Activated CD4-positive, alpha-beta memory T cell treated with anti-CD3 and anti-CD28 coated beads for 36 hours (primary cell): ENCODE measurements at regions of chr14 and their contacts with region 1.

Region 1: GRCh38 chr14:97707603-97708002 is 910.4 kb downstream of the VRK1 start:
- DNase-seq: peak; percentile 60
- H3K4me3 Mint-ChIP-seq: no peak overlapping the region
- H3K27ac Mint-ChIP-seq: no peak overlapping the region
- H3K4me1 Mint-ChIP-seq: peaks cover 90% of the 10 kb centered on the region
- H3K27me3 Mint-ChIP-seq: no peaks in the 10 kb centered on the region

Region 2: DNA sequence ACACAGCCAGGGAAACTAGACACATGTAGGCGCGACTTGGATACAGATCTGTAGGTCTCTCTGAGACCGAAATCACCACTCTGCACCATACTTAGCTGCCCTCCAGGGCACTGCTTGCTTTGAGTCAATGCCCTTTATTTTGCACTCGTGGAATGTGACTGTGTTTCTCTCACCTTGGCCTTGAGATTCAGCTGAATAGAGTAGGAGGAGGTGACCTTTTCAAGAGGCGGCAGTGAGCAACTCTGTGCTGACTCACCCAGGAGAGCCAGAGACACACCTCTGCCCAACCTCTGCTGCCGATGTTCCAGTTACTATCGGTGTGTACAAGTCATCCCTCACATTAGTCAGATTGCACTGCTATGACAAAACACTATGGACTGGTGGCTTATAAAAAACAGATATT is 327.1 kb before region 1 on chr14:
- CTCF ChIA-PET with region 1: no interaction called
- POLR2A ChIA-PET with region 1: no interaction called
- intact Hi-C with region 1: loop called (anchors 2 kb)
- DNase-seq: peak; percentile 89
- H3K4me3 Mint-ChIP-seq: no peak overlapping the region
- H3K27ac Mint-ChIP-seq: peak overlapping the region; percentile 78
- H3K4me1 Mint-ChIP-seq: peaks cover 59% of the 10 kb centered on the region
- H3K27me3 Mint-ChIP-seq: no peaks in the 10 kb centered on the region

Region 3: DNA sequence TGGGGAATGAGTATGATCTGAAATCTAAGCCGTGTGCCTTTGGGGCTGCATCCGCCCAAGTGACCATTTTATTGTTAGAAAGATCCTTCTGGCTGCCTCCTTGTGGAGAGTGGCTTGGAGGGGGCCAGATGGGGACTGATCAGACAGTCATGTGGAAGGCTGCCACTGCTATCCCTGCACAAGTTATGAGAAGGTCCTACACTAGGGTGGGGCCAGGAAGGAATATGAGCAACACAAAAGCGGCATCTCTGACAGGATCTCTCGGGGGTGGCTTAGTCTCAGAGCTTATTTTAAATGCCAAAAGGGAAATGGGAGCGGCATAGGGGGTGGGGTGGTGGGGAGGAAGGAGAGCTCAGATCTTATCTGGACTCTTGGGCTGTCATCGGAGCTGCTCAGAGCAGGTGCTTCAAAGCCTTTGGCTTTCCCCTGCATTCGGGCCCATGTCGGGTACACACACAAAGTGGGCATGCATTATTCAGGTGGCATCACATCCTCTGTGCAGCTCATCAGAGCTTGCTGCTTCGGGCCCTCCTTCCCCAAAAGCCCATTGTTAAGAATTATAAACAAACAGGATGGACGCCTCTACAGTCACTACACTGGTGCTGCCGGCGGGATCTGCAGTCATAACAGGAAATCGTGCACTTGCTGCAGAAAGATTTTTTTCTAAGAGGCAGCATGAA is 105.0 kb before region 1 on chr14:
- CTCF ChIA-PET with region 1: no interaction called
- POLR2A ChIA-PET with region 1: interaction called, 4 read pairs
- intact Hi-C with region 1: loop called (anchors 2 kb)
- DNase-seq: peak; percentile 80
- H3K4me3 Mint-ChIP-seq: no peak overlapping the region
- H3K27ac Mint-ChIP-seq: no peak overlapping the region
- H3K4me1 Mint-ChIP-seq: peaks cover 29% of the 10 kb centered on the region
- H3K27me3 Mint-ChIP-seq: no peaks in the 10 kb centered on the region

Region 4: GRCh38 chr14:97634751-97635150 is 72.9 kb before region 1 on chr14:
- CTCF ChIA-PET with region 1: no interaction called
- POLR2A ChIA-PET with region 1: no interaction called
- intact Hi-C with region 1: loop called (anchors 5 kb)
- DNase-seq: peak; percentile 36
- H3K4me3 Mint-ChIP-seq: peak overlapping the region; percentile 75
- H3K27ac Mint-ChIP-seq: no peak overlapping the region
- H3K4me1 Mint-ChIP-seq: peaks cover 25% of the 10 kb centered on the region
- H3K27me3 Mint-ChIP-seq: no peaks in the 10 kb centered on the region

Region 5: GRCh38 chr14:97788364-97788763 is 80.8 kb after region 1 on chr14:
- CTCF ChIA-PET with region 1: no interaction called
- POLR2A ChIA-PET with region 1: interaction called, 3 read pairs
- intact Hi-C with region 1: loop called (anchors 2 kb)
- DNase-seq: no peak
- H3K4me3 Mint-ChIP-seq: no peak overlapping the region
- H3K27ac Mint-ChIP-seq: no peak overlapping the region
- H3K4me1 Mint-ChIP-seq: peaks cover 5% of the 10 kb centered on the region
- H3K27me3 Mint-ChIP-seq: no peaks in the 10 kb centered on the region

Region 6: GRCh38 chr14:97902630-97903029 is 195.0 kb after region 1 on chr14:
- CTCF ChIA-PET with region 1: no interaction called
- POLR2A ChIA-PET with region 1: no interaction called
- intact Hi-C with region 1: no loop called
- DNase-seq: no peak
- H3K4me3 Mint-ChIP-seq: no peak overlapping the region
- H3K27ac Mint-ChIP-seq: no peak overlapping the region
- H3K4me1 Mint-ChIP-seq: no peaks in the 10 kb centered on the region
- H3K27me3 Mint-ChIP-seq: no peaks in the 10 kb centered on the region

Region 7: GRCh38 chr14:98138666-98139065 is 431.1 kb after region 1 on chr14:
- CTCF ChIA-PET with region 1: interaction called, 3 read pairs
- POLR2A ChIA-PET with region 1: no interaction called
- intact Hi-C with region 1: loop called (anchors 10 kb)
- DNase-seq: peak; percentile 73
- H3K4me3 Mint-ChIP-seq: peak overlapping the region; percentile 42
- H3K27ac Mint-ChIP-seq: peak overlapping the region; percentile 80
- H3K4me1 Mint-ChIP-seq: peaks cover 76% of the 10 kb centered on the region
- H3K27me3 Mint-ChIP-seq: no peaks in the 10 kb centered on the region